B cell (primary cell): ENCODE measurements at regions of chr6 and their contacts with region 1.

Region 1: GRCh38 chr6:39361657-39362486 is 39.4 kb upstream of the KCNK16 start:
- DNase-seq: peak; percentile 67
- ATAC-seq: peak; percentile 63
- H3K4me3 ChIP-seq: no peak overlapping the region
- H3K4me3 Mint-ChIP-seq: no peak overlapping the region
- H3K27ac ChIP-seq: no peak overlapping the region
- H3K27ac Mint-ChIP-seq: no peak overlapping the region
- H3K4me1 ChIP-seq: peaks cover 3% of the 10 kb centered on the region in 2 donors
- H3K4me1 Mint-ChIP-seq: no peaks in the 10 kb centered on the region
- H3K27me3 ChIP-seq: no peaks in the 10 kb centered on the region
- H3K27me3 Mint-ChIP-seq: peaks cover 13% of the 10 kb centered on the region
- CTCF ChIP-seq: peak; percentile 83

Region 2: GRCh38 chr6:37698261-37699137 is 1663.4 kb before region 1 on chr6:
- CTCF ChIA-PET with region 1: no interaction called
- POLR2A ChIA-PET with region 1: no interaction called
- intact Hi-C with region 1: no loop called
- DNase-seq: peak; percentile 83
- ATAC-seq: peak; percentile 37
- H3K4me3 ChIP-seq: peak overlapping the region; percentile 40 to 72 (median 60)
- H3K4me3 Mint-ChIP-seq: peak overlapping the region; percentile 88
- H3K27ac ChIP-seq: no peak overlapping the region
- H3K27ac Mint-ChIP-seq: peak overlapping the region; percentile 90
- H3K4me1 ChIP-seq: peaks cover 24 to 25% of the 10 kb centered on the region in 2 donors
- H3K4me1 Mint-ChIP-seq: peaks cover 26% of the 10 kb centered on the region
- H3K27me3 ChIP-seq: peaks cover 0 to 37% (median 18%) of the 10 kb centered on the region in 4 experiments
- H3K27me3 Mint-ChIP-seq: peaks cover 27% of the 10 kb centered on the region
- CTCF ChIP-seq: no peak

Region 3: DNA sequence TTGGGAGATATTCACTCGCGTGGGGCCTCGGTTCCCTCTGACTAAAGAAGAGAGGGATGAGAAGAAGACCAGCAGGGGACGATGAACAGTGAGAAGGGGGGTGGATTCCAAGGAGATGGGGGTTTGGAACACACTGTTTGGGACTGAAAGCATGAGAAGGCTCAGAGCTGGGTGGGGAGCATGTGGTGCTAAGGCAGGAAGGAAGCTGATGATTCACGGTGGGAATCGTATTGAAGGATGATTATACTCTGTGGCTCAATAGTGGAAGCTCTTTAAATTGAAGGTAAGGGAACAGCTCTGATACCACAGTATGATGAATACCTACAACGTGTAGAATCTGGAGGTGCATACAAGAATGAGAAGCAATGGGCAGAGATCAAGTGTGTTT is 78.2 kb after region 1 on chr6:
- CTCF ChIA-PET with region 1: no interaction called
- POLR2A ChIA-PET with region 1: no interaction called
- intact Hi-C with region 1: no loop called
- DNase-seq: no peak
- ATAC-seq: no peak
- H3K4me3 ChIP-seq: no peak overlapping the region
- H3K4me3 Mint-ChIP-seq: no peak overlapping the region
- H3K27ac ChIP-seq: no peak overlapping the region
- H3K27ac Mint-ChIP-seq: no peak overlapping the region
- H3K4me1 ChIP-seq: no peaks in the 10 kb centered on the region
- H3K4me1 Mint-ChIP-seq: no peaks in the 10 kb centered on the region
- H3K27me3 ChIP-seq: no peaks in the 10 kb centered on the region
- H3K27me3 Mint-ChIP-seq: no peaks in the 10 kb centered on the region
- CTCF ChIP-seq: no peak

Region 4: DNA sequence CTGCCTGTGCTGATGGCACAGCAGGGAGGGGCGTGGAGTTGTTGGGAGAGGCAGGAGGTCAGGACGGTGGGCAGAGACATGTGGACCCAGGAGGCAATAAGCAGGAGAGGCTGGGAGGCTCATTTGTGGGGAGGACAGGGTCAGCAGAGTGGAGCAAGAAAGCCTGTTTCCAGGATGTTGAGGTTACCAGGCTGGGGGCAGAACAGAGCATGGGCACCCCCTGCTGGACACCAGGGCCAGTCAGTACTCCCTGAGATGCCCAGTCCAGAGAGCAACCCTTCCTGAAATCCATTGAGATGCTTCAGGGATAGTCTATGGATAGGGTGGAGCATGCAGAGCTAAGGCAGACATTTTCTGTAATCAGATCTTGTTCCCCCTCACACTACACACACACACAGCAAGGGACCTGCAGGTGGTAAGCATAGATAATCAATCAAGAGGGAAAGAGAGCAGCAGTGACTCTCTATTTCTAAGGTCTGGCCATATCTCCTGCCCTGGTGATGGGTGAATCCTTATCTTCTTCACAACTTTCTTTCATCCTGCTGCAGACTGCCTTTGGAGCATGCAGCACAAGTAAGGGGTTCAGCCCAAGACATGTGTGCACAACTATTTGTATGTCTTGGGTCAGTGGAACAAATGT is 530.7 kb after region 1 on chr6:
- CTCF ChIA-PET with region 1: interaction called, 3 read pairs
- POLR2A ChIA-PET with region 1: no interaction called
- intact Hi-C with region 1: loop called (anchors 5 kb)
- DNase-seq: no peak
- ATAC-seq: peak; percentile 33
- H3K4me3 ChIP-seq: no peak overlapping the region
- H3K4me3 Mint-ChIP-seq: no peak overlapping the region
- H3K27ac ChIP-seq: no peak overlapping the region
- H3K27ac Mint-ChIP-seq: no peak overlapping the region
- H3K4me1 ChIP-seq: no peaks in the 10 kb centered on the region
- H3K4me1 Mint-ChIP-seq: no peaks in the 10 kb centered on the region
- H3K27me3 ChIP-seq: peaks cover 0 to 8% (median 0%) of the 10 kb centered on the region in 4 experiments
- H3K27me3 Mint-ChIP-seq: peaks cover 21% of the 10 kb centered on the region
- CTCF ChIP-seq: no peak

Region 5: DNA sequence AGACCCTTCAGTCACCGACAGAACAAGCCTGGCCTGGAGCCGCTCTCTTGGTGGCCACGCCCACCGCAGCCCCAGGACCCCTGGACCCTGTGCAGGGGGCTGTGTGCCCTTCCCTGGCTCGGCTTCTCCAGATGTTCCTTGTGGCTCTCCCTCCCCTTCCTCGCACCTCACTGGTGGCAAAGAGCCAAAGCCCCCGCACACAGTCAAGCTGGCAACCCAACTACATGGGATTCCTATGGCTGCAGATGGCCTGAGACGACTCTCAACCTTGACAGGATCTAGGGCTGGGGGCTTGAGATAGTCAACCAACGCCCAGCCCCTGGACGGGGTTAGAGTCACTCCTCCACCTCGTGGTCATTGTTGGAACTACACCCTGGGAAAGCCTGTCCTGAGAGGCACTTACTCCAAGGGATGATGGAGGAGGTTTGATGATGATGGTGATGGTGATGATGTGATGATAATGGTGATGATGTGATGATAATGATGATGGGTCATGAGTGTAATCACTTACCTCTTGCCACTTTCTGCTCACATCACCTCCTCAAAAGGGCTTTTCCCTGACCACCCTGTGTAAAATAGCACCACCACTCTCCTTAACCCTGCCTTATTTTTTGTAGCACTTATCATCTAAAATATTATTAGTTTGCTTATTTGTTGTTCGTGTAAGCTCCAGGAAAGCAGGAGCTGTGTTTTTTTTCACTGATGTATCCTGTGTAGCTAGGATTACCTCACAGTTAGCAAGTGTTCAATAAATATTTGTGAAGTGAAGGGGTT is 946.8 kb after region 1 on chr6:
- CTCF ChIA-PET with region 1: interaction called, 6 read pairs
- POLR2A ChIA-PET with region 1: no interaction called
- intact Hi-C with region 1: loop called (anchors 5 kb)
- DNase-seq: peak; percentile 67
- ATAC-seq: peak; percentile 28
- H3K4me3 ChIP-seq: no peak overlapping the region
- H3K4me3 Mint-ChIP-seq: no peak overlapping the region
- H3K27ac ChIP-seq: no peak overlapping the region
- H3K27ac Mint-ChIP-seq: no peak overlapping the region
- H3K4me1 ChIP-seq: no peaks in the 10 kb centered on the region
- H3K4me1 Mint-ChIP-seq: no peaks in the 10 kb centered on the region
- H3K27me3 ChIP-seq: peaks cover 0 to 19% (median 3%) of the 10 kb centered on the region in 4 experiments
- H3K27me3 Mint-ChIP-seq: peaks cover 51% of the 10 kb centered on the region
- CTCF ChIP-seq: peak; percentile 78